Posterior vena cava (tissue), 2 donors: ENCODE measurements at regions of chr13 and their contacts with region 1.

Region 1: GRCh38 chr13:102830646-102831045 is 15.2 kb upstream of the ERCC5 start:
- DNase-seq: no peak

Region 2: GRCh38 chr13:102814025-102814607 is 16.5 kb before region 1 on chr13:
- intact Hi-C with region 1: loop called in 1 of 2 experiments (anchors 1 kb)
- DNase-seq: no peak